Upper lobe of right lung (tissue), 1 donor: ENCODE measurements at regions of chr17 and their contacts with region 1.

Region 1: GRCh38 chr17:77068915-77069314 is 71.9 kb upstream of the SEC14L1 start:
- DNase-seq: no peak
- ATAC-seq: no peak
- H3K4me3 ChIP-seq: no peak overlapping the region
- H3K27ac ChIP-seq: no peak overlapping the region
- H3K4me1 ChIP-seq: no peaks in the 10 kb centered on the region
- H3K27me3 ChIP-seq: peaks cover 19% of the 10 kb centered on the region
- CTCF ChIP-seq: no peak

Region 2: DNA sequence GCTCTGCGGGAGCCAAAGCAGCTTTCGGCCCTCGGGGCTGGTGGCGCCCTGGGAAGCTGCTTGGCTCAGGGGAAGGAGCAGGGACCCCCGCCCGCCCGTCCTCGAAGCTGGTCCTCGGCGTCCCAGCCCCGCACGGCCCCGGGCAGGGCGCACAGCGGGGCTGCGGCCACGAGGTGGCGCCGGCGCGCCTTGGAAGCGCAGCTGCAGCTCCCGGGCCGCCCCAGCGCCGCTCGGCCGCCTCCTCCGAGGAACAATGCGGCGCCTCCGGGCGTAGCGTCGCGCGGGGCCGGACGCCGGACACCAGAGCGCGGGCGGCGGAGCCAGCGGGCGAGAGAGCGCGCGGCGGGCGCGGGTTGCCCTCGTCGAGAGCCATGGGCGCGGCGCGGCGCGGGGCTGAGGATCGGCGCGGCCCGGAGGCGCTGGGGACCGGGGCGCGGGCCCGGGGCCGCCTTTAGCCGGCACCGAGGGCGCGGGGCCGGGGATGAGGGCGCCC is 200.7 kb before region 1 on chr17 and contains the start of gene MGAT5B:
- intact Hi-C with region 1: loop called (anchors 5 kb)
- DNase-seq: peak; percentile 91
- ATAC-seq: peak; percentile 96
- H3K4me3 ChIP-seq: peak within 1 kb of the TSS; percentile 40
- H3K27ac ChIP-seq: no peak within 1 kb of the TSS
- H3K4me1 ChIP-seq: peaks cover 7% of the 10 kb centered on the region
- H3K27me3 ChIP-seq: peaks cover 33% of the 10 kb centered on the region
- CTCF ChIP-seq: peak; percentile 72
- total RNA-seq, gene MGAT5B: 2.0 TPM

Region 3: GRCh38 chr17:77140166-77140878 is 71.4 kb after region 1 on chr17:
- intact Hi-C with region 1: no loop called
- DNase-seq: peak; percentile 100
- ATAC-seq: peak; percentile 97
- H3K4me3 ChIP-seq: peak overlapping the region; percentile 75
- H3K27ac ChIP-seq: peak overlapping the region; percentile 91
- H3K4me1 ChIP-seq: peaks cover 34% of the 10 kb centered on the region
- H3K27me3 ChIP-seq: no peaks in the 10 kb centered on the region
- CTCF ChIP-seq: no peak